ENCODE measurements at regions of chr15 and their contacts with region 1.

Region 1: GRCh38 chr15:92881802-92882696 is 18.1 kb upstream of the CHD2 start:
- DNase-seq: peak; percentile 97 to 99 (median 98)
- ATAC-seq: peak; percentile 83
- H3K4me3 ChIP-seq: peak overlapping the region; percentile 50
- H3K4me3 Mint-ChIP-seq: peak overlapping the region; percentile 93
- H3K27ac ChIP-seq: peak overlapping the region; percentile 85 to 99
- H3K27ac Mint-ChIP-seq: peak overlapping the region; percentile 97
- H3K4me1 ChIP-seq: peaks cover 41% of the 10 kb centered on the region
- H3K4me1 Mint-ChIP-seq: peaks cover 66% of the 10 kb centered on the region
- H3K27me3 ChIP-seq: no peaks in the 10 kb centered on the region
- H3K27me3 Mint-ChIP-seq: peaks cover 5% of the 10 kb centered on the region
- CTCF ChIP-seq: no peak

Region 2: GRCh38 chr15:92808978-92809879 is 72.8 kb before region 1 on chr15:
- CTCF ChIA-PET with region 1: interaction called, 118 read pairs
- POLR2A ChIA-PET with region 1: interaction called, 913 read pairs
- intact Hi-C with region 1: loop called (anchors 1 kb)
- DNase-seq: peak; percentile 96 to 100 (median 98)
- ATAC-seq: peak; percentile 70
- H3K4me3 ChIP-seq: peak overlapping the region; percentile 59
- H3K4me3 Mint-ChIP-seq: peak overlapping the region; percentile 82
- H3K27ac ChIP-seq: peak overlapping the region; percentile 95 to 98
- H3K27ac Mint-ChIP-seq: peak overlapping the region; percentile 100
- H3K4me1 ChIP-seq: peaks cover 52% of the 10 kb centered on the region
- H3K4me1 Mint-ChIP-seq: peaks cover 63% of the 10 kb centered on the region
- H3K27me3 ChIP-seq: no peaks in the 10 kb centered on the region
- H3K27me3 Mint-ChIP-seq: no peaks in the 10 kb centered on the region
- CTCF ChIP-seq: peak; percentile 75

Region 3: GRCh38 chr15:92831655-92832328 is 50.3 kb before region 1 on chr15:
- CTCF ChIA-PET with region 1: interaction called, 11 read pairs
- POLR2A ChIA-PET with region 1: interaction called, 405 read pairs
- intact Hi-C with region 1: loop called (anchors 1 kb)
- DNase-seq: peak; percentile 73 to 95 (median 89)
- ATAC-seq: peak; percentile 91
- H3K4me3 ChIP-seq: peak overlapping the region; percentile 33
- H3K4me3 Mint-ChIP-seq: peak overlapping the region; percentile 73
- H3K27ac ChIP-seq: peak overlapping the region; percentile 85 to 96
- H3K27ac Mint-ChIP-seq: peak overlapping the region; percentile 98
- H3K4me1 ChIP-seq: peaks cover 46% of the 10 kb centered on the region
- H3K4me1 Mint-ChIP-seq: peaks cover 57% of the 10 kb centered on the region
- H3K27me3 ChIP-seq: no peaks in the 10 kb centered on the region
- H3K27me3 Mint-ChIP-seq: no peaks in the 10 kb centered on the region
- CTCF ChIP-seq: no peak

Region 4: DNA sequence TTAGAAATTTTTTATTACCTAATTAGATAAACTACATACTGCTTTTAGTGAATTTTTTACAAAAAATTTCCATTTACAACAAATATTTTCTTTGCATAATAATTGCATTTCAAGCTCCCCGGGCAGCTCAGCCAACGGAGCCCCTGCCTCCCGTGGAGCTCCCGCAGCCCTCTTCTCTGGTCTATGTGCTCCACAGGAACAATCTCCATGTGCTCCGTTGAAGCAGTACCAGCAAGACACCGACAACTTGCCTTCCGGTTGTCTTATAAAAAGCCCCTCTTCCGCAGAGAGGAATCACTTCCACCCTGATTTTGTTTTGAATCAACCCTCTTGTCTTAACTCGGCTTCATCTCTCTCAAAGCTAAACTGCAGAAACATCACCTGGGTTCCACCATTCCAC is 28.8 kb before region 1 on chr15:
- CTCF ChIA-PET with region 1: interaction called, 4 read pairs
- POLR2A ChIA-PET with region 1: interaction called, 305 read pairs
- intact Hi-C with region 1: loop called (anchors 2 kb)
- DNase-seq: no peak
- ATAC-seq: no peak
- H3K4me3 ChIP-seq: no peak overlapping the region
- H3K4me3 Mint-ChIP-seq: no peak overlapping the region
- H3K27ac ChIP-seq: no peak overlapping the region
- H3K27ac Mint-ChIP-seq: no peak overlapping the region
- H3K4me1 ChIP-seq: peaks cover 25% of the 10 kb centered on the region
- H3K4me1 Mint-ChIP-seq: peaks cover 41% of the 10 kb centered on the region
- H3K27me3 ChIP-seq: no peaks in the 10 kb centered on the region
- H3K27me3 Mint-ChIP-seq: no peaks in the 10 kb centered on the region
- CTCF ChIP-seq: no peak

Region 5: GRCh38 chr15:92868992-92869988 is 12.8 kb before region 1 on chr15:
- CTCF ChIA-PET with region 1: no interaction called
- POLR2A ChIA-PET with region 1: interaction called, 13 read pairs
- intact Hi-C with region 1: no loop called
- DNase-seq: no peak
- ATAC-seq: no peak
- H3K4me3 ChIP-seq: no peak overlapping the region
- H3K4me3 Mint-ChIP-seq: no peak overlapping the region
- H3K27ac ChIP-seq: no peak overlapping the region
- H3K27ac Mint-ChIP-seq: no peak overlapping the region
- H3K4me1 ChIP-seq: no peaks in the 10 kb centered on the region
- H3K4me1 Mint-ChIP-seq: peaks cover 8% of the 10 kb centered on the region
- H3K27me3 ChIP-seq: no peaks in the 10 kb centered on the region
- H3K27me3 Mint-ChIP-seq: no peaks in the 10 kb centered on the region
- CTCF ChIP-seq: no peak

Region 6: DNA sequence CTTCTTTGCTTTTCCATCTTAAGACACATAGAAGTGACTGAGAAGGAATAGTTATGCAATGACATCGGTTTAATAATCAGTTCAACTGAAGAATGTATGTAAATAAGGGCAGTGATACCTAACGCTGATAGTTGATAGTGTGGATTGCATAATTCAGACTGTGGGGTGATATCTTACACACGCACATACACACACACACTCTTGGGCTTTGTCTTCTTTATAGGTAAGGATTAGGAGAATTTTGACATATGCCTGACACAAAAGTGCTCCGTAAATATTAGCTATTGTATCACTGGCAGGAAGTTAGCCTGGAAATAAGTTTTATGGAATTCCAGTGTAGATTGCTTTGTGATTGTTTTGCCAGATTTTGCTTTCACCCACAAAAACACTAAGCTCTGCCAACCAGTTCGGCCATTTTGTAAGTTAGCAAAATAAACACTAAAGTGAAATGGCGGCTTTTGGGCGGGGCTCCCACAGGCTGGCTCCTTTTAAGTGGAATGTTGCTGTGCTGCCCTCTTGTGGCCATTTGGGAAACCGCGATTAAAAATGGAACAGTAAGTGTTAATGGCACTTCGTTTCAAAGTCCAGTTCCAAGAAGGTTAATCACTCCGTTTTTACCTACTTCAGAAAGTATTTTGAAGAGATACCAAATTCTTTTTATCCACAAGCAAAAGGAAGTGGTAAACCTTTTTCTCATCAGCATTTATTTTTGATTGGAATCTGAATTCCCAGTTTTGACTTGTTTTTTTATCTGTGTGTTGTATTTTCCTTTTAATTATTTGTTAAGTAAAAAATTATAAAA is 35.8 kb after region 1 on chr15:
- CTCF ChIA-PET with region 1: interaction called, 13 read pairs
- POLR2A ChIA-PET with region 1: interaction called, 211 read pairs
- intact Hi-C with region 1: loop called (anchors 1 kb)
- DNase-seq: peak; percentile 82 to 95 (median 90)
- ATAC-seq: peak; percentile 26
- H3K4me3 ChIP-seq: no peak overlapping the region
- H3K4me3 Mint-ChIP-seq: peak overlapping the region; percentile 67
- H3K27ac ChIP-seq: peak overlapping the region; percentile 63 to 75
- H3K27ac Mint-ChIP-seq: peak overlapping the region; percentile 99
- H3K4me1 ChIP-seq: peaks cover 77% of the 10 kb centered on the region
- H3K4me1 Mint-ChIP-seq: peaks cover 84% of the 10 kb centered on the region
- H3K27me3 ChIP-seq: no peaks in the 10 kb centered on the region
- H3K27me3 Mint-ChIP-seq: no peaks in the 10 kb centered on the region
- CTCF ChIP-seq: peak; percentile 94

Region 7: GRCh38 chr15:92968926-92969651 is 87.0 kb after region 1 on chr15:
- CTCF ChIA-PET with region 1: no interaction called
- POLR2A ChIA-PET with region 1: no interaction called
- intact Hi-C with region 1: no loop called
- DNase-seq: peak in 2 of 14 experiments; percentile 23 to 26
- ATAC-seq: peak; percentile 41
- H3K4me3 ChIP-seq: no peak overlapping the region
- H3K4me3 Mint-ChIP-seq: no peak overlapping the region
- H3K27ac ChIP-seq: no peak overlapping the region
- H3K27ac Mint-ChIP-seq: peak overlapping the region; percentile 37
- H3K4me1 ChIP-seq: peaks cover 3% of the 10 kb centered on the region
- H3K4me1 Mint-ChIP-seq: peaks cover 53% of the 10 kb centered on the region
- H3K27me3 ChIP-seq: no peaks in the 10 kb centered on the region
- H3K27me3 Mint-ChIP-seq: no peaks in the 10 kb centered on the region
- CTCF ChIP-seq: no peak